ENCODE measurements at regions of chr15 and their contacts with region 1.

Region 1: DNA sequence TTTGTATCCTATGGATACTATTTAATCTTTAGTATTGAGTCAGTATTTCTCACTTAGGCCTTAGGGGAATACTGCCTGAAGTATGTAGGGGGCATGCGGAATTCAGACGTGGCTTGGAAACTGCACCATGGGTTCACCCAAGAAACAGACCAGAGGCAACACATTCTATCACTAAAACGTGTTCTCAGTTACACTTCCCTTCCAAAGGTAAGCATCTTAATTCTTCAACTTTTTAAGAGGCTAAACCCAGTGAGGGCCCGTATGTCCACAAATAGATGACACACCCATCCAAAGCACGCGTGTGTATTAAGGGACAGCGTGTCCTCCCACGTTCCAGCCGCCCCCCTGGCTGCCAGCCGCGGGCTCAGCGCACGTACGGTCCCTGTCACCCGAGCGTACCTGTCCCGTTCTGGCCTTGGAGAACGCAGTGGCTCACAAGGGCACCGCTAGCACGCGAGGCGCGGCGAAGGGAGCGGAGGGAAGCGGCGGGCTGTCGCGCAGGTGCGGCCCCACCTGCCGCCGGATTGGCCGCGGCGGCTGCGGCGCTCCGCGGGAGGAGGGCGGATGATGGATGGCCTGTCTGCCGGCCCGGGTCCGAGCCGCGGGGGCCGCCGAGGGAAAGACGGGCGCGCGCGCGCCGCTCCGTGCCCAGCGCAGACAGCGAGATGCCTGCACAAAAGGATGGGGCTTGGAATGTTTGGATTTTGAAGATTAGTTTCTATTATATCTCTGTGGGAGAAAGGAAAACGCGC is 1003.9 kb upstream of the NR2F2 start:
- DNase-seq: peak in 1 of 2 donors; percentile 35
- ATAC-seq: peak in 6 of 8 donors; percentile 26 to 65 (median 54)
- H3K4me3 ChIP-seq: peak overlapping the region; percentile 32 to 61 (median 50)
- H3K27ac ChIP-seq: peak overlapping the region; percentile 72 to 90 (median 84)
- H3K4me1 ChIP-seq: peaks cover 0 to 29% (median 5%) of the 10 kb centered on the region in 9 donors
- H3K27me3 ChIP-seq: peaks cover 0 to 29% (median 14%) of the 10 kb centered on the region in 7 donors
- CTCF ChIP-seq: no peak

Region 2: GRCh38 chr15:95252404-95252803 is 74.2 kb before region 1 on chr15:
- intact Hi-C with region 1: no loop called
- DNase-seq: no peak
- ATAC-seq: no peak
- H3K4me3 ChIP-seq: no peak overlapping the region
- H3K27ac ChIP-seq: no peak overlapping the region
- H3K4me1 ChIP-seq: peaks cover 0 to 13% (median 0%) of the 10 kb centered on the region in 9 donors
- H3K27me3 ChIP-seq: peaks cover 0 to 3% (median 0%) of the 10 kb centered on the region in 7 donors
- CTCF ChIP-seq: no peak

Region 3: DNA sequence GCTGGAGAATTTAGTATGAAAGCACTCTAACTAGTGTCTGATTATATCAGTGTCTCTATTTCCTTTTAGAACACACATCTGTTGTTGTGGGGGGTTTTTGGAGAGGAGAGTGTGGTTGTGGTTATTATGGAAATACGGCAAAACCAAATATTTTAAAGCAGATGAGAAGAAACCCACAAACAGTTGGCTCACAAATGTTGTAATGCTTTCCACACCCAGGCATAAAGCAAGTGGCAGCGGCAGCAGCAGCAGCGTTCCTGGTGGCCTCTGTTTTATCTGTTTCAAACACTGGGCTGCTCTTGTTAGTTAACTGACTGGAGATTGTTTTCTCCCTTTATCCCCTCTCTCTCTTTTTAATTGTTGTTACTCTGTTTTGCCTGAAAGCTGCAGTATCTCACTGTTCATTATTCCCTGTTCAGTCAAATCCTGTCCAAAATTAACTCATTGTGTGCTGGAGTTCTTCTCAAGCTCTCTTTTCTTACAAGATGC is 41.6 kb before region 1 on chr15:
- intact Hi-C with region 1: loop called in 1 of 10 experiments (anchors 5 kb)
- DNase-seq: no peak
- ATAC-seq: peak in 4 of 8 donors; percentile 40 to 65 (median 50)
- H3K4me3 ChIP-seq: no peak overlapping the region
- H3K27ac ChIP-seq: peak overlapping the region in 7 of 10 donors; percentile 5 to 36 (median 17)
- H3K4me1 ChIP-seq: peaks cover 0 to 29% (median 0%) of the 10 kb centered on the region in 9 donors
- H3K27me3 ChIP-seq: peaks cover 0 to 4% (median 0%) of the 10 kb centered on the region in 7 donors
- CTCF ChIP-seq: peak in 5 of 9 donors; percentile 13 to 40 (median 34)

Region 4: DNA sequence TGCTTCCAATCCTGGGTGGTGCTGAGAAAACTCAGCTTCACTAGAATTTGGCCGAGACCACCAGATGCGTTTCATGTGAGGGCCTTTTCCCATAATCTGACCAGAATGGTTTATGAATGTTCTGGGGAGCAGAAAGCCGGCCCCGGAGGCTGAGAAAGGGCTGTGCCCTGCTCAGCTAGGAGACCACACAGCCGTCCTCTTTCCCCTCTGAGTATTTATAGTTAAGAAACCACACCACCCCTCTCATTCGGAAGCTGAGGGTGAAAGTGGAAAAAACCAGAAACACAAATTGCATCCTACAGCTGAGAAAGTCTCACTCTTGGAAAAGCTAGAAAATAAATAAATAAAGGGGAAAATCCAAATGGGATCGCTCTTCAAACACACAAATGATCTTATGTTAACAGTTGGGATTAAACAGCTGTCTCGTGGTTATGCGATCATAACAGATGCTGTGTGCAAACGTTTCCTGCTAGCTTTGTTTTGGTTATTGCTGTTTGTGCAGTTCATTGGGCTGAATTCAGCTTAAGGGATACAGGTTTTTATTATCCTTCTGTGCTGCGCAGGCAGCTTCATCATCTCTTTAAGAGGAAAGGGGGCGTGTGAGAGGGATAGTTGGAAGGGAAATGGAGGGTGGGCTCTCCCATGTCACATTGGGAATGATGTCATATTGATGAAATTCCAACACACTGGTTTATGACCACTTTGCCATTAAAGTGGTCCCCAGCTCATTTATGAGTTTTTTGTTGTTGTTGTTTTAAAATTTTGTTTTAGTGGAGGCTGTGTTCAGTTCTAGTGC is 22.3 kb before region 1 on chr15:
- intact Hi-C with region 1: no loop called
- DNase-seq: peak in 1 of 2 donors; percentile 44
- ATAC-seq: peak; percentile 41 to 89 (median 81)
- H3K4me3 ChIP-seq: peak overlapping the region in 3 of 10 donors; percentile 3 to 19 (median 6)
- H3K27ac ChIP-seq: peak overlapping the region; percentile 43 to 87 (median 72)
- H3K4me1 ChIP-seq: peaks cover 4 to 35% (median 17%) of the 10 kb centered on the region in 9 donors
- H3K27me3 ChIP-seq: peaks cover 0 to 3% (median 0%) of the 10 kb centered on the region in 7 donors
- CTCF ChIP-seq: no peak

Region 5: GRCh38 chr15:95459273-95459672 is 132.7 kb after region 1 on chr15:
- intact Hi-C with region 1: loop called in 1 of 10 experiments (anchors 5 kb)
- DNase-seq: no peak
- ATAC-seq: peak in 7 of 8 donors; percentile 49 to 85 (median 77)
- H3K4me3 ChIP-seq: no peak overlapping the region
- H3K27ac ChIP-seq: peak overlapping the region in 9 of 10 donors; percentile 0 to 77 (median 56)
- H3K4me1 ChIP-seq: peaks cover 0 to 34% (median 18%) of the 10 kb centered on the region in 9 donors
- H3K27me3 ChIP-seq: no peaks in the 10 kb centered on the region
- CTCF ChIP-seq: no peak

Measured in heart right ventricle (tissue), 16 donors.